Activated CD4-positive, alpha-beta T cell treated with anti-CD3 and anti-CD28 coated beads, Interleukin-2, amount 10 ng/mL, durations not matched to agents 7 days and 5 days (primary cell): ENCODE measurements at regions of chr3 and their contacts with region 1.

Region 1: DNA sequence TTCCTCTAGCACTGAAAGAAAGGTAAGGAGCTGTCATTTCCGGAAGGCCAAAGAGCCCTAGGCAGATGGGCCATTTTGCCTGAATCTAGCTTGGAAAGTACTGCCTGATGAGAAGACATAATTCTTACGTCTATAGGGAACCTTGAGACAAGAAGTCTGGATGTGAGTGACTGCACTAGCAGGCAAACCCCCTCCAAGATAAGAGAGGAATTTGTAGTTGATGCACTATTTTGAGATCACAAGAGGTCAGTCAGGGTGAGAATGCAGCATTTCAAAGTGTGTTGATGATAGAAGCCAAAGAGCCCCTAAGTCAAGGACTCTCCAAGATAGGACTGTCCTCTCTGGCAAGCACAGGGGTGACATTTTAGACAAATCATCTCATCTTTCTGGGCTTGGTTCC is 99.2 kb downstream of the HES1 start:
- DNase-seq: no peak
- H3K4me3 Mint-ChIP-seq: no peak overlapping the region
- H3K27ac Mint-ChIP-seq: no peak overlapping the region
- H3K4me1 Mint-ChIP-seq: peaks cover 3% of the 10 kb centered on the region
- H3K27me3 Mint-ChIP-seq: peaks cover 15% of the 10 kb centered on the region

Region 2: GRCh38 chr3:194135806-194136535 is 99.2 kb before region 1 on chr3 and contains the start of gene HES1:
- CTCF ChIA-PET with region 1: no interaction called
- POLR2A ChIA-PET with region 1: interaction called, 10 read pairs
- DNase-seq: peak; percentile 45
- H3K4me3 Mint-ChIP-seq: peak within 1 kb of the TSS; percentile 85
- H3K27ac Mint-ChIP-seq: peak within 1 kb of the TSS; percentile 93
- H3K4me1 Mint-ChIP-seq: peaks cover 66% of the 10 kb centered on the region
- H3K27me3 Mint-ChIP-seq: peaks cover 80% of the 10 kb centered on the region
- total RNA-seq, gene HES1: 2.4 to 2.7 TPM

Region 3: GRCh38 chr3:194306109-194306686 is 71.0 kb after region 1 on chr3:
- CTCF ChIA-PET with region 1: no interaction called
- POLR2A ChIA-PET with region 1: no interaction called
- DNase-seq: peak; percentile 79
- H3K4me3 Mint-ChIP-seq: peak overlapping the region; percentile 64
- H3K27ac Mint-ChIP-seq: peak overlapping the region; percentile 91
- H3K4me1 Mint-ChIP-seq: peaks cover 69% of the 10 kb centered on the region
- H3K27me3 Mint-ChIP-seq: no peaks in the 10 kb centered on the region